CD4-positive, alpha-beta memory T cell (primary cell): ENCODE measurements at regions of chr19 and their contacts with region 1.

Region 1: DNA sequence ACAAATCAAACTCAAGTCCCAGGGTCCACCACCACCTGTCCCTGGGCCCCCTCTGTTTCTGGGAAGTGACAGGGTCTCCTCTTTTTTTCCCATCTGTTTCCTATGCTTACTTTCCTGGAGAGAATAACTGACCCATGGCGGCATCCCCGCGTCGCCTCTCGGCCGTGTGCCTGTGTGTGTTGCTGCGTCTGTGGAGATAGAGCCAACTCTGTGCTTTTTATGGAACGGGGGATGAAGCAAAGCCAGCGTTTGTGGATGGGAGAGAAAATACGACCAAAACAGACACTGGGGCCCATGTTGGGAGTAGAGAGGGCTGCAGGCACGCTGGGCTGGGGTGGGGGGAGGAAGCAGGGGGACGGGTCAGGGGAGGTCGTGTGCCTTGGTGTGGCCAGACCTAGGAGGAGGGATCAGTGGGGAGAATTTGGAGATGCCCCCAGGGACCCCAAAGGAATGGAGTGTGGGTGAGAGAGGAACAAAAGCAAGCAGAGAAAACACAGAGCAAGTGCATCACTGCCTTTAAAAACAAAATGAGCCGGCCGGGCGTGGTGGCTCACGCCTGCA is 16.6 kb downstream of the PLK5 start:
- DNase-seq: no peak
- H3K4me3 ChIP-seq: no peak overlapping the region
- H3K4me3 Mint-ChIP-seq: no peak overlapping the region
- H3K27ac ChIP-seq: no peak overlapping the region
- H3K27ac Mint-ChIP-seq: no peak overlapping the region
- H3K4me1 ChIP-seq: no peaks in the 10 kb centered on the region
- H3K4me1 Mint-ChIP-seq: no peaks in the 10 kb centered on the region
- H3K27me3 ChIP-seq: no peaks in the 10 kb centered on the region
- H3K27me3 Mint-ChIP-seq: peaks cover 14 to 18% of the 10 kb centered on the region in 2 donors

Region 2: GRCh38 chr19:1560286-1560882 is 19.9 kb after region 1 on chr19:
- CTCF ChIA-PET with region 1: interaction called, 14 read pairs
- POLR2A ChIA-PET with region 1: no interaction called
- intact Hi-C with region 1: no loop called
- DNase-seq: no peak
- H3K4me3 ChIP-seq: no peak overlapping the region
- H3K4me3 Mint-ChIP-seq: no peak overlapping the region
- H3K27ac ChIP-seq: no peak overlapping the region
- H3K27ac Mint-ChIP-seq: no peak overlapping the region
- H3K4me1 ChIP-seq: no peaks in the 10 kb centered on the region
- H3K4me1 Mint-ChIP-seq: no peaks in the 10 kb centered on the region
- H3K27me3 ChIP-seq: no peaks in the 10 kb centered on the region
- H3K27me3 Mint-ChIP-seq: no peaks in the 10 kb centered on the region